GM12878 (cell line): ENCODE measurements at regions of chr1 and their contacts with region 1.

Region 1: DNA sequence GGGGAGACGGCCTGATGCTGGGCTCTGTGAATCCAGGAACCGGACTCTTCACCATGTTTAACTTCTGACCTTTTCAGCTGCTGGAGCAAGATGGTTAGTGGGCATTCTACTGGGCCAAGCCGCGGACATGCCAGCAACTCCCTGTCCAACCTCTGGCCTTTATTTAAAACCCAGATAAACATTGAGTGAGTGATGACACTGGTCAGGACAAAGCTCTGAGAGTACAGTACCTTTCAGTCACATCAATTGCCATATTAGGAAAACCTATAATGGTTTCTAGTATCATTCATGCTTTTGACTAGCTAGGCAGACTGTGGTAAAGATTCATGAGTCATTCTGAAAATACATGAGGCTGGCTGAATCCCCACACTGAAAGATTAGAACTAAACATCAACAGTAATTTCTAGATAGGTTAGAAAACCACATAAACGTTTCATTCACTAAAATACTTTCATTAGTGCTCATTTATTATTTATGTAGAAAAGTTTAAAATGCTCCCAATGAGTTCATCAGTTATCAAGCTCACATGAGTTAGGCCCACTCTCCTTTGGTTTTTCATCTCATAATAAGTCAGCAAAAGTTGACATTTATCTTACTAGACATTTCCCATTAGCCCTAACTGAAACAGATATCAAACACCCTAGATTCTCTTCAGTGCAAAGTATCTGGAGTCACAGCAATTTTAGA is 7.1 kb upstream of the ACTA1 start:
- DNase-seq: peak; percentile 88
- ATAC-seq: peak; percentile 98
- H3K4me3 ChIP-seq: no peak overlapping the region
- H3K27ac ChIP-seq: 0 out of 2 replicates have a peak overlapping the region, but pooled peaks have one; percentile 0
- H3K4me1 ChIP-seq: peaks cover 17% of the 10 kb centered on the region
- H3K27me3 ChIP-seq: no peaks in the 10 kb centered on the region
- CTCF ChIP-seq: no peak
- EP300 ChIP-seq: peak; percentile 93 to 95
- POLR2A ChIP-seq: no peak
- RAD21 ChIP-seq: no peak

Region 2: GRCh38 chr1:229270547-229271447 is 170.2 kb before region 1 on chr1 and contains the start of gene RAB4A:
- CTCF ChIA-PET with region 1: no interaction called
- POLR2A ChIA-PET with region 1: no interaction called
- RAD21 ChIA-PET with region 1: no interaction called
- SMC1A ChIA-PET with region 1: no interaction called
- in situ Hi-C with region 1: no loop called
- intact Hi-C with region 1: loop called (anchors 5 kb)
- DNase-seq: peak; percentile 43
- ATAC-seq: peak; percentile 96
- H3K4me3 ChIP-seq: peak within 1 kb of the TSS; percentile 95
- H3K27ac ChIP-seq: peak within 1 kb of the TSS; percentile 7; the same call in 1 of the 2 replicates
- H3K4me1 ChIP-seq: peaks cover 9% of the 10 kb centered on the region
- H3K27me3 ChIP-seq: no peaks in the 10 kb centered on the region
- CTCF ChIP-seq: no peak
- EP300 ChIP-seq: no peak
- POLR2A ChIP-seq: peak; percentile 92
- RAD21 ChIP-seq: no peak
- polyA plus RNA-seq, gene RAB4A: 4.0 to 8.5 TPM

Region 3: GRCh38 chr1:229318056-229318455 is 122.9 kb before region 1 on chr1:
- CTCF ChIA-PET with region 1: no interaction called
- POLR2A ChIA-PET with region 1: no interaction called
- RAD21 ChIA-PET with region 1: no interaction called
- SMC1A ChIA-PET with region 1: no interaction called
- in situ Hi-C with region 1: no loop called
- intact Hi-C with region 1: no loop called
- DNase-seq: no peak
- ATAC-seq: no peak
- H3K4me3 ChIP-seq: no peak overlapping the region
- H3K27ac ChIP-seq: no peak overlapping the region
- H3K4me1 ChIP-seq: no peaks in the 10 kb centered on the region
- H3K27me3 ChIP-seq: no peaks in the 10 kb centered on the region
- CTCF ChIP-seq: no peak
- EP300 ChIP-seq: no peak
- POLR2A ChIP-seq: no peak
- RAD21 ChIP-seq: no peak

Region 4: DNA sequence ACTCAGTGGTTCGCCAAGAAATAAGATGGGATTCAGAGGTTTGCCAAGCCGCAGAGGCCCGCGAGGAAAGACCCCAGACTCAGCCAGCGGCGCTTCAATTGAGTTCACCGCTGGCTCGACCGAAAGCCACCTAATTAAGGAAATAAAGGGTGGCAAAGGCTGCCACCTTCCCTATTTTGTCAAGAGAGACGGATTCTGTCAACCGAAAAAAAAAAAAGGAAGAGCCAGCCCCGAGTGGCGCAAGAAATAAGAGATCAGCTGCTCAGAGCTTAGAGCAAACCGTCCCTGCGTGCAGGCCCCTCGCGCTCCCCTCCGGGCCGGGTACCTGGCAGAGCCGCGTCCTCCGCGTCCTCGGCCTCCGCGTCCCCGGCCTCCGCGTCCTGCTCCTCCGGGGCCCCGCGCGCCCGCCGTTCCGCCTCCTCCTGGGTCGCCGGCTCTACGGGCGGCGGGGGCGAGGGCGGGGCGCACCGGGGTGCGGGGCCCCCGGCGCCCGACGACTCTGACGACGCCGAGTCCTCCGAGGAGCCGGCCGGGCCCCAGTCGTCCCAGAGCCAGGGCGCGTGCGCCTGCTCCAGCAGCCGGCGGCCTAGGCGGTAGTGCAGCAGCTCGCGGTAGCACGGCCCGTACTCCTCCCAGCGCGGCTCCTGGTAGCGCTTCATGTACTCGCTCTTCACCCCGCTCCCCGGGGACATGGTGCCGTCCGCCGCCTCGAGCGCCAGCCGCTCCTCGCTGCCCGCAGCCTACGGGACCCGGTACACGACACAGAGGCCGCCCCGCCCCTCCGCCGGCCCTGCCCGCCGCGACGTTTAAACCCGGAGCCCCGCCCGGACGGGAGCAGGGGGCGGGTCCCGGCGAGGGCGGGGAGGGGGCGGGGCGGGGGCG is 99.0 kb before region 1 on chr1:
- CTCF ChIA-PET with region 1: no interaction called
- POLR2A ChIA-PET with region 1: no interaction called
- RAD21 ChIA-PET with region 1: no interaction called
- SMC1A ChIA-PET with region 1: interaction called, 4 read pairs
- in situ Hi-C with region 1: no loop called
- intact Hi-C with region 1: loop called (anchors 1 kb)
- DNase-seq: no peak
- ATAC-seq: peak; percentile 86
- H3K4me3 ChIP-seq: peak overlapping the region; percentile 65
- H3K27ac ChIP-seq: no peak overlapping the region; the same call in 1 of the 2 replicates
- H3K4me1 ChIP-seq: peaks cover 6% of the 10 kb centered on the region
- H3K27me3 ChIP-seq: no peaks in the 10 kb centered on the region; a peak in 2 of 4 replicates
- CTCF ChIP-seq: no peak
- EP300 ChIP-seq: no peak
- POLR2A ChIP-seq: peak; percentile 73; the same call in 1 of the 2 replicates
- RAD21 ChIP-seq: no peak

Region 5: GRCh38 chr1:229352975-229353374 is 88.0 kb before region 1 on chr1:
- CTCF ChIA-PET with region 1: no interaction called
- POLR2A ChIA-PET with region 1: no interaction called
- RAD21 ChIA-PET with region 1: no interaction called
- SMC1A ChIA-PET with region 1: no interaction called
- in situ Hi-C with region 1: no loop called
- intact Hi-C with region 1: no loop called
- DNase-seq: no peak
- ATAC-seq: no peak
- H3K4me3 ChIP-seq: no peak overlapping the region
- H3K27ac ChIP-seq: no peak overlapping the region
- H3K4me1 ChIP-seq: no peaks in the 10 kb centered on the region
- H3K27me3 ChIP-seq: peaks cover 0 to 2% of the 10 kb centered on the region in 2 experiments; a peak in 1 of 4 replicates
- CTCF ChIP-seq: no peak
- EP300 ChIP-seq: no peak
- POLR2A ChIP-seq: no peak
- RAD21 ChIP-seq: no peak

Region 6: GRCh38 chr1:229368347-229368746 is 72.6 kb before region 1 on chr1:
- CTCF ChIA-PET with region 1: no interaction called
- POLR2A ChIA-PET with region 1: no interaction called
- RAD21 ChIA-PET with region 1: no interaction called
- SMC1A ChIA-PET with region 1: interaction called, 4 read pairs
- in situ Hi-C with region 1: no loop called
- intact Hi-C with region 1: loop called (anchors 2 kb)
- DNase-seq: peak; percentile 59
- ATAC-seq: peak; percentile 85
- H3K4me3 ChIP-seq: no peak overlapping the region
- H3K27ac ChIP-seq: no peak overlapping the region
- H3K4me1 ChIP-seq: peaks cover 14% of the 10 kb centered on the region
- H3K27me3 ChIP-seq: peaks cover 3 to 4% of the 10 kb centered on the region in 2 experiments; a peak in 3 of 4 replicates
- CTCF ChIP-seq: no peak
- EP300 ChIP-seq: no peak
- POLR2A ChIP-seq: no peak
- RAD21 ChIP-seq: no peak

Region 7: GRCh38 chr1:229452956-229453801 is 12.2 kb after region 1 on chr1:
- CTCF ChIA-PET with region 1: interaction called, 4 read pairs
- POLR2A ChIA-PET with region 1: interaction called, 3 read pairs
- RAD21 ChIA-PET with region 1: interaction called, 3 read pairs
- SMC1A ChIA-PET with region 1: interaction called, 15 read pairs
- in situ Hi-C with region 1: no loop called
- intact Hi-C with region 1: no loop called
- DNase-seq: no peak
- ATAC-seq: peak; percentile 38; the same call in 1 of the 3 replicates
- H3K4me3 ChIP-seq: no peak overlapping the region
- H3K27ac ChIP-seq: no peak overlapping the region
- H3K4me1 ChIP-seq: no peaks in the 10 kb centered on the region
- H3K27me3 ChIP-seq: no peaks in the 10 kb centered on the region
- CTCF ChIP-seq: peak; percentile 34 to 54 (median 41); a peak in 5 of 6 replicates
- EP300 ChIP-seq: no peak
- POLR2A ChIP-seq: no peak
- RAD21 ChIP-seq: peak; percentile 52

Region 8: GRCh38 chr1:229972600-229973296 is 531.8 kb after region 1 on chr1:
- CTCF ChIA-PET with region 1: no interaction called
- POLR2A ChIA-PET with region 1: no interaction called
- RAD21 ChIA-PET with region 1: no interaction called
- SMC1A ChIA-PET with region 1: no interaction called
- in situ Hi-C with region 1: no loop called
- intact Hi-C with region 1: no loop called
- DNase-seq: no peak
- ATAC-seq: peak; percentile 22; the same call in 1 of the 3 replicates
- H3K4me3 ChIP-seq: no peak overlapping the region
- H3K27ac ChIP-seq: no peak overlapping the region
- H3K4me1 ChIP-seq: no peaks in the 10 kb centered on the region
- H3K27me3 ChIP-seq: no peaks in the 10 kb centered on the region
- CTCF ChIP-seq: peak; percentile 20 to 26 (median 26); a peak in 5 of 6 replicates
- EP300 ChIP-seq: no peak
- POLR2A ChIP-seq: no peak
- RAD21 ChIP-seq: peak; percentile 40; the same call in 1 of the 2 replicates